ENCODE measurements at regions of chr10 and their contacts with region 1.

Region 1: DNA sequence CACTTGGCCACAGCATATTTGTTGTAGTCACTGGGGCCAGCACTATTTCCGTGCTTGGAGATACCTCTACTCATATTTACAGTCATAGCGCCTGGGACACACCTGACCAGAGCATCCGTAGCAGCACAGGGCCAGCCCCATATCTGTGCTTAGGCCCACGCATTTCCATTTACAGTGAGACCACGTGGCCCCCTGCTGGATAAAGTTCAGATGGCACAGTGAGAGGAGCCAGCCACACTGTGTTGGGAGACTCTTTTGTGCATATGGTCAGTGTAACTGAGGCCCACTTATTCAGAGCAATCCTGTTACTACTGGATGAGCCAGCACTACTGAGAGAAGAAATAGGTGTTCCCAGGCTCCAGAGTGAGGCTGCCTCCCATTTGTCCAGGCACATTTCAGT is 455.3 kb downstream of the REEP3 start:
- DNase-seq: peak in 2 of 4 donors; percentile 19 to 46
- ATAC-seq: peak; percentile 97
- H3K4me3 ChIP-seq: no peak overlapping the region
- H3K27ac ChIP-seq: no peak overlapping the region
- H3K4me1 ChIP-seq: no peaks in the 10 kb centered on the region
- H3K27me3 ChIP-seq: no peaks in the 10 kb centered on the region
- CTCF ChIP-seq: peak; percentile 49 to 55

Region 2: DNA sequence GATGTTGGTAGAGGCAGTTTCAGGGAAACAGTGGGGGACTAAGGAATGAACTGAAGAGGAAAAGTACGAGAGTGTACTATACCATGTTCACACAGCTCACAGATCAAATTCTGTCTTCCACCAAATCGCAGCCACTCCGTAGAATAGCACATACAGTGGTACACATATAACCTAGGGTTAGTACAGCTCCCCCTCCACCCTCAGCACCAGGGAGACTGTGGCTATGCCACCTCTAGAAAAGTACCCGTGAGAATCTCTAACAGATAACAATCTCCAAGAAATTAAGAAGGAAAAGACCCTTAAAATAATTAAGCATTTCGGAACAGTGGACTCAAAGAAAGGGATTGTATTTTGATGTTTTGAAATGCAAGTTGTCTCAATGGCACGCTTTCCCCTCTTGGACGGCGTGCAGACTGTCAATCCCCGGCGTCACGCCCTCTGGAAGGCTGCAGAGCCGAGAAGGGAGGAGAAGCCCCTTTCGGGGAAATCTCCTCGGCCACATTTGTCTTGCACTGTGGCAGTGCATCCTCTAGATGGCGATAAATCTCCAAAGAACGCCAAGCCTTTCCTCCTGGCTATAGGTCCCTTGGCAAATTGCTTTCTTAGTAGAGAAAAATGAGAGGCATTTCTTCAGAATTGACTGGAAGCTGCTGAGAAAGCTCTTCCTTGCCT is 110.3 kb before region 1 on chr10:
- intact Hi-C with region 1: loop called in 1 of 2 experiments (anchors 5 kb)
- DNase-seq: peak in 2 of 4 donors; percentile 60 to 83
- ATAC-seq: peak; percentile 96
- H3K4me3 ChIP-seq: no peak overlapping the region
- H3K27ac ChIP-seq: no peak overlapping the region
- H3K4me1 ChIP-seq: peaks cover 0 to 8% of the 10 kb centered on the region in 2 donors
- H3K27me3 ChIP-seq: peaks cover 0 to 28% of the 10 kb centered on the region in 2 donors
- CTCF ChIP-seq: peak; percentile 68 to 74

Measured in left lung (tissue), 14 donors.